ENCODE measurements at regions of chr18 and their contacts with region 1.

Region 1: GRCh38 chr18:45690975-45691815 is 32.8 kb upstream of the SLC14A1 start:
- DNase-seq: peak; percentile 30
- H3K4me3 ChIP-seq: no peak overlapping the region
- H3K27ac ChIP-seq: no peak overlapping the region
- H3K4me1 ChIP-seq: no peaks in the 10 kb centered on the region
- CTCF ChIP-seq: peak; percentile 78

Region 2: GRCh38 chr18:45626330-45627203 is 64.6 kb before region 1 on chr18:
- CTCF ChIA-PET with region 1: no interaction called
- POLR2A ChIA-PET with region 1: no interaction called
- intact Hi-C with region 1: no loop called
- DNase-seq: no peak
- H3K4me3 ChIP-seq: no peak overlapping the region
- H3K27ac ChIP-seq: no peak overlapping the region
- H3K4me1 ChIP-seq: no peaks in the 10 kb centered on the region
- CTCF ChIP-seq: no peak

Region 3: DNA sequence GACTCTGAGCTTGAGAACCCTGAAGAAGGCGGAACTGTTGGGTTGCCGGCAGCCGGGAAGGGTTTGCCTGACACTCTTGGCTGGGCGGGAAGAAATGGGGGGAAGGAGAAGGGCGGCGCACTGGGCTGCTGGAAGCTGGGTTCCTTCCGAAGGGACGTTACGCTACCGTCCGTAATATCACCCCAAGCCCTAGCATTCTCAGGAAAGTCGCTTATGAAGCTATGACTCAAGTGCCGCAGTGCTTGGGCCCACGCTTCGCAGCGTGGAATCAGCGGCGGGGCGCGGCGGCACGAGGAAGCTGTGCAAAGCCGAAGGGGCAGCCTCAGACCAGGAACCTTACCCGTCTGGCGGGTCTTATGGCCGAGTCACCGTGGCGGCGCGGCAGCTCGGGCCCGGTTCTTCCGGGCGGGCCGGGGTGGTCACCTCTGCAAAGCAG is 84.1 kb after region 1 on chr18:
- CTCF ChIA-PET with region 1: no interaction called
- POLR2A ChIA-PET with region 1: no interaction called
- intact Hi-C with region 1: loop called (anchors 5 kb)
- DNase-seq: no peak
- H3K4me3 ChIP-seq: no peak overlapping the region
- H3K27ac ChIP-seq: no peak overlapping the region
- H3K4me1 ChIP-seq: no peaks in the 10 kb centered on the region
- CTCF ChIP-seq: no peak

Region 4: DNA sequence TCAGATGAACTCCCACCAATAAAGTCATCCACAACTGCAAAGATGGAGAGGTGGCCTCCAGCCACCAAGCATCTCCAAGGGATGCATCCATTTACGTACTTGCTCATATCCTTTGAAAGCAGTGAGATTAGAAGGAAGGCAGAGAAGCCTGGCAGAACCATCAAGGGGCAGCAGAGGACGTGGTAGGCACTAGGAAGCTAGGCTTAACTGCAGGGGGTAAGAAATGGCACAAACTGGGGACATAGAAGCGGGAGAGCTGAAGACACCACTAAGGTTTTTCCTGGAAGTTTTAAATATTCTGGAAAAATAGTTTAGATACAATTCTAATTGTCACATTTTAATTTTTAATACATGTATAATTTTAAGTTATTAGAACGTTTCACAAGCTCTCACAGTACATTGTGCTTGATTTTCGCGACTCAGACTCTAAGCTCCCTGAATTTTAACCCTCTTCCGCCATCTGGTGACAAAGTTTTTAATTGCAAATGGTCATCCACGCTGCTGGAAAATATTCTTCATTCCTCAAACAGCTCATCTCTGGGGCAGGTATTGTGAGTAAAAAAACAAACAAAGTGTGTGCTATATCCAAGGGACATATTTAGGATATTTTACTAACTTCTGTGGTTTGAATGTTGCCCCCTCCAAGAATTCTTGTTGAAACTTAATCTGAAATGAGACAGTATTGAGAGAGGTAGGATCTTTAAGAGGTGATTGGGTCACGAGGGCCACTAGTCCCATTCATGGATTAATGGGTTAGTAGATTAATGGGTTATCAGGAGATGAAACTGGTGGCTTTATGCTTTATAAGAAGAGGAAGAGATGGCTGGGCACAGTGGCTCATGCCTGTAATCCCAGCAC is 382.5 kb after region 1 on chr18:
- CTCF ChIA-PET with region 1: no interaction called
- POLR2A ChIA-PET with region 1: no interaction called
- intact Hi-C with region 1: loop called (anchors 10 kb)
- DNase-seq: peak; percentile 29
- H3K4me3 ChIP-seq: no peak overlapping the region
- H3K27ac ChIP-seq: no peak overlapping the region
- H3K4me1 ChIP-seq: no peaks in the 10 kb centered on the region
- CTCF ChIP-seq: peak; percentile 74

Measured in OCI-LY7 (cell line).